ENCODE measurements at regions of chr14 and their contacts with region 1.

Region 1: DNA sequence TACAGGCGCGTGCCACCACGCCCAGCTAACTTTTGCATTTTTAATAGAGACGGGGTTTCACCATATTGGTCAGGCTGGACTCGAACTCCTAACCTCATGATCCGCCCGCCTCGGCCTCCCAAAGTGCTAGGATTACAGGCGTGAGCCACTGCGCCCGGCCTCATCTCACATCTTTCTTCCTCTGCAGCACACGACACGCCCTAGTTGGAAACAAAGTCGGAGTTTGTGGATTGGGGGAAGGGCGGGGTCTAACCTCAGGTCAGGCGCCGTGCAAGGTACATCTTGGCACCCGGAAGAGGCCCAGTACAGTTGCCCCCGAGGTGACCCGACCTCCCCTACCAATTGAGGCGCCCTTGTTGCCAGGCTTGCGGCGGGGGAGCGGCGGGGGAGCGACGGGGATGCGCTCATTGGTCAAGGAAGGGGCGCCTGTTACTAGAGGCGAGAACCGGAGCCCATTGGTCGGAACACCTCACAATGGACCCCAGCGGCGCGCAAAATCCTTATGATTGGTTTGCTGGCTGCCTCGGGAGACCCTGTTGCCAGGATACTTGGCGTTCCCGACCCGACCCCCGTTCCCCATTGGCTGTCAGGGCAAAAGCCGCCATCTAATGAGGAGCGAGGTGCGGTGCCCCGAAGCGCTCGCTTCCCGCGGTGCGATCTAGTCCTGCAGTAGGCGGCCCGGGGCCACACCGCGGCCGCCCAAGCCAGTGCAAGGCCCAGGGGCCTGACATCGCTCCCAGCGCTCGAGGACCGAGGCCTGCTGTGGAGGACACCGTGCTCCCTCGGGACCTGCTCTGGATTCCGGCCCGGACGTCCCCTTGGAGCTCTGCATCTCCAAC is at the start of gene REC8:
- DNase-seq: peak; percentile 67 to 89 (median 80)
- H3K4me3 ChIP-seq: peak within 1 kb of the TSS; percentile 48
- H3K4me3 Mint-ChIP-seq: peak within 1 kb of the TSS; percentile 81 to 91 (median 90)
- H3K27ac ChIP-seq: no peak within 1 kb of the TSS
- H3K27ac Mint-ChIP-seq: peak within 1 kb of the TSS; percentile 88 to 96 (median 93)
- H3K4me1 ChIP-seq: no peaks in the 10 kb centered on the region
- H3K4me1 Mint-ChIP-seq: peaks cover 33 to 48% (median 47%) of the 10 kb centered on the region in 3 donors
- H3K27me3 ChIP-seq: no peaks in the 10 kb centered on the region
- H3K27me3 Mint-ChIP-seq: peaks cover 0 to 2% of the 10 kb centered on the region in 2 donors
- total RNA-seq, gene REC8: 24.5 to 26.7 TPM

Region 2: GRCh38 chr14:24092505-24093206 is 79.0 kb before region 1 on chr14:
- CTCF ChIA-PET with region 1: no interaction called
- POLR2A ChIA-PET with region 1: no interaction called
- DNase-seq: no peak
- H3K4me3 ChIP-seq: no peak overlapping the region
- H3K4me3 Mint-ChIP-seq: peak overlapping the region; percentile 93 to 99 (median 97)
- H3K27ac ChIP-seq: no peak overlapping the region
- H3K27ac Mint-ChIP-seq: peak overlapping the region; percentile 32 to 98 (median 90)
- H3K4me1 ChIP-seq: peaks cover 16% of the 10 kb centered on the region
- H3K4me1 Mint-ChIP-seq: peaks cover 28 to 37% (median 37%) of the 10 kb centered on the region in 3 donors
- H3K27me3 ChIP-seq: no peaks in the 10 kb centered on the region
- H3K27me3 Mint-ChIP-seq: no peaks in the 10 kb centered on the region

Region 3: GRCh38 chr14:24207104-24207551 is 35.5 kb after region 1 on chr14:
- CTCF ChIA-PET with region 1: no interaction called
- POLR2A ChIA-PET with region 1: interaction called, 12 read pairs
- DNase-seq: peak in 4 of 5 donors; percentile 15 to 58 (median 35)
- H3K4me3 ChIP-seq: no peak overlapping the region
- H3K4me3 Mint-ChIP-seq: peak overlapping the region in 3 of 7 donors; percentile 3 to 22 (median 17)
- H3K27ac ChIP-seq: no peak overlapping the region
- H3K27ac Mint-ChIP-seq: peak overlapping the region; percentile 48 to 97 (median 94)
- H3K4me1 ChIP-seq: peaks cover 18% of the 10 kb centered on the region
- H3K4me1 Mint-ChIP-seq: peaks cover 45 to 72% (median 57%) of the 10 kb centered on the region in 3 donors
- H3K27me3 ChIP-seq: no peaks in the 10 kb centered on the region
- H3K27me3 Mint-ChIP-seq: peaks cover 0 to 3% of the 10 kb centered on the region in 2 donors

Region 4: DNA sequence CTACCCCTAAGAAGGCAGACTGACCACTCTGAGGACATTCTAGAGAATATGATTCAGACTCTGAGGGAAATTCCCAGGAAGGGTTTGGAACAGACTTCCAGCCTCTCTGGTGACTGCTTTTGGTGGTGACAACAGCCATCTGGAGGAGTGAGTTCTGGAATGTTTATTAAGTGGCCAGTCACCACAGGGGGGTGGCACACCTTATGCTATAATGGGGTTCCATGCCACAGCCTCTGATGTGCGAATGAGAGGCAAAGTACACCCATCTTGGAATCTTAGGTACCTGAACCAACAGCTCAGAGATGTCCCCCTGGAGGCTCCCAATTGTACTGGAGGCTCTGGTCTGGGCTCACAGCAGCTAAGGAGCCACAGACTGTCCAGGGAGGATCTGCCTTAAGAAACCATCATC is 80.2 kb after region 1 on chr14:
- CTCF ChIA-PET with region 1: no interaction called
- POLR2A ChIA-PET with region 1: no interaction called
- DNase-seq: no peak
- H3K4me3 ChIP-seq: no peak overlapping the region
- H3K4me3 Mint-ChIP-seq: no peak overlapping the region
- H3K27ac ChIP-seq: no peak overlapping the region
- H3K27ac Mint-ChIP-seq: peak overlapping the region in 1 of 8 donors; percentile 41
- H3K4me1 ChIP-seq: no peaks in the 10 kb centered on the region
- H3K4me1 Mint-ChIP-seq: peaks cover 7 to 11% (median 10%) of the 10 kb centered on the region in 3 donors
- H3K27me3 ChIP-seq: no peaks in the 10 kb centered on the region
- H3K27me3 Mint-ChIP-seq: no peaks in the 10 kb centered on the region